ENCODE measurements at regions of chr4 and their contacts with region 1.

Region 1: DNA sequence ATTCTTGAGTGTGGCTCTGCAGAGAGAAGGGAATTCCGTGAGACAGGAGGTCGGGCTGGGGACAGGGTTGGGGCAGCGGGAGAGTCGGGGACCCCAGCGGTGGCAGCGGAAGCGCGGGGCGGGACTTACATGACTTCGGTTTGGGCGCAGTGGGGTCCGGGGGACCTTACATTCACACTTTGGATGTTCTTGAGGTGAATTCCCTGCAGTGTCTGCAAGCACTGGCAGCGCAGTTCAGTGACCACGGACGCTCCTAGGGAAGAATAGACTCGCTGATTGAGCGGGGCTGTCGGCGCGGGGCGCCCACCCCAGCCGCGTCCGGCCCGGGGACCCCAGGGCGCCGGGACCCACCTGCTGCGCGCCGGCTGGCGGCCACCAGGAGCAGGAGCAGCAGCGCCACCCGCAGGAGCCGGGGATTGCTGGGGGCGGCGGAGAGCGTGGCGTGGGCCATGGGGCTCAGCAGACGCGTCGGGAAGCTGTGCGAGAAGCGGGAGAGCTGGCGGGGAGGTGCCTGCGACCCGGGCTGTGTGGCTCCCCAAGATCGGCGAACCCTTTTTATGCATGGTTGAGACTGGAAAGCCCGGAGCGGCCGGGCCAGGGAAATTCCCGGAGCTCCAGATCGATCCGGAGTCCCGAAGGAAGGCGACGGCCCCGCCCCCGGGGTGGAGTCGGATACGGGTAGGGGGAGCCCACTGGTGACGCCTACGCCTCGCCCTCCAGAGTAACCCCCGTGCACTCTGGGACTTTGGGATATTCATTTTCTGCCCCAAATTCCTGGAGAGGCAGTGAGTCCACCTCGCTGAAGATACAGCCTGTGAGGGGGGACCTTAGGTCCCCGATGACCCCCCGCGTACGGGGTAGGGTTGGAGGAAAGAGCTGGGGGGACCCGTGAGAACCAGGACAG is at the start of gene CXCL3:
- DNase-seq: peak; percentile 78
- ATAC-seq: peak; percentile 86
- H3K4me3 ChIP-seq: peak within 1 kb of the TSS; percentile 78
- H3K27ac ChIP-seq: peak within 1 kb of the TSS; percentile 51
- H3K4me1 ChIP-seq: peaks cover 48% of the 10 kb centered on the region
- H3K27me3 ChIP-seq: no peaks in the 10 kb centered on the region
- CTCF ChIP-seq: peak; percentile 75
- total RNA-seq, gene CXCL3: 25.1 and 28.9 TPM in 2 replicates

Region 2: GRCh38 chr4:73751166-73751565 is 287.2 kb before region 1 on chr4:
- CTCF ChIA-PET with region 1: no interaction called
- POLR2A ChIA-PET with region 1: no interaction called
- intact Hi-C with region 1: no loop called
- DNase-seq: no peak
- ATAC-seq: no peak
- H3K4me3 ChIP-seq: no peak overlapping the region
- H3K27ac ChIP-seq: no peak overlapping the region
- H3K4me1 ChIP-seq: no peaks in the 10 kb centered on the region
- H3K27me3 ChIP-seq: no peaks in the 10 kb centered on the region
- CTCF ChIP-seq: no peak

Region 3: GRCh38 chr4:73922766-73923630 is 115.4 kb before region 1 on chr4:
- CTCF ChIA-PET with region 1: no interaction called
- POLR2A ChIA-PET with region 1: no interaction called
- intact Hi-C with region 1: loop called (anchors 1 kb)
- DNase-seq: peak; percentile 83
- ATAC-seq: peak; percentile 70
- H3K4me3 ChIP-seq: no peak overlapping the region
- H3K27ac ChIP-seq: peak overlapping the region; percentile 59
- H3K4me1 ChIP-seq: peaks cover 26% of the 10 kb centered on the region
- H3K27me3 ChIP-seq: no peaks in the 10 kb centered on the region
- CTCF ChIP-seq: peak; percentile 91

Region 4: DNA sequence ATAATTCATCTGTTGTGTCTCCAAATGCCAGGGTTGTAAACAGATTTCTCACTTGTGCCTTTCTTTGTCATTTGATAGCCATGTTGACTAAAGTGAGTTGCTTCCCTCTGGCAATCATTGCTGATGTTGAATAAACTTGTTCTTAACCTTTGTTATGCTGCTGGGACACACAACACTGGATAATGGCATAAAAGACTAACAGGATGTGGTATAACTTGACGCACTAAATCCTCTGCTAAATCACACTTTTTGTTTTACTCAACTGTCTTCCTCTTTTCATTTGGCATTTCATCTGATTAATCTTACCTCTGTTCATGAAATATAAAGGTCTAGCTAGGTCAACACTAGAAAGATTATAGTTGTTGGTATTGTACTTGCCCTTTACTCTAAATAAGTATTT is 22.3 kb before region 1 on chr4:
- CTCF ChIA-PET with region 1: interaction called, 3 read pairs
- POLR2A ChIA-PET with region 1: no interaction called
- intact Hi-C with region 1: loop called (anchors 2 kb)
- DNase-seq: peak; percentile 94
- ATAC-seq: peak; percentile 94
- H3K4me3 ChIP-seq: no peak overlapping the region
- H3K27ac ChIP-seq: peak overlapping the region; percentile 91
- H3K4me1 ChIP-seq: peaks cover 24% of the 10 kb centered on the region
- H3K27me3 ChIP-seq: no peaks in the 10 kb centered on the region
- CTCF ChIP-seq: no peak

Region 5: GRCh38 chr4:74098450-74098994 is 60.1 kb after region 1 on chr4:
- CTCF ChIA-PET with region 1: interaction called, 5 read pairs
- POLR2A ChIA-PET with region 1: interaction called, 3 read pairs
- intact Hi-C with region 1: loop called (anchors 2 kb)
- DNase-seq: no peak
- ATAC-seq: peak; percentile 5
- H3K4me3 ChIP-seq: peak overlapping the region; percentile 78
- H3K27ac ChIP-seq: peak overlapping the region; percentile 98
- H3K4me1 ChIP-seq: peaks cover 28% of the 10 kb centered on the region
- H3K27me3 ChIP-seq: no peaks in the 10 kb centered on the region
- CTCF ChIP-seq: no peak

Region 6: GRCh38 chr4:74109116-74109869 is 70.9 kb after region 1 on chr4:
- CTCF ChIA-PET with region 1: no interaction called
- POLR2A ChIA-PET with region 1: interaction called, 11 read pairs
- intact Hi-C with region 1: no loop called
- DNase-seq: peak; percentile 99
- ATAC-seq: peak; percentile 79
- H3K4me3 ChIP-seq: peak overlapping the region; percentile 45
- H3K27ac ChIP-seq: peak overlapping the region; percentile 96
- H3K4me1 ChIP-seq: peaks cover 65% of the 10 kb centered on the region
- H3K27me3 ChIP-seq: no peaks in the 10 kb centered on the region
- CTCF ChIP-seq: no peak

Measured in PC-3 (cell line).